Endothelial cell of umbilical vein (primary cell): ENCODE measurements at regions of chr10 and their contacts with region 1.

Region 1: DNA sequence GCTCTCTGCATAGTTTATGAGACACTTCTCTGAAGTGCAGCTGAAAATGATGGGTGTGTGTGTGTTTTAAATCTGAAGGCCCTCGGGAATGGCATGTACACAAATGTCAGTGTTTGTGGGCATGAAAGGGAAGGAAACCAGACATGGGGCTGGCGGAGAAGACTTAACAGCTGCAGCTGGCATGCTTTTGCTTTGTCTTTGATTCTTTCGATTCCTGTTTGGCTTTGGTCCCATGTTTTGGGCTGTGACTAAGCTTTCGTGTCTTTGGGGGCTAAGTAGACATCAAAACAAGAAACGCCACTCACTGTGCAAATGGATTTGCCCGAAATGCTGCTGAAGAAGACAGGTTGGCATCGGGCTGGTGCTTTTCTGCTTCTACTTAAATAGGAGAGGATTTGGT is 179.3 kb downstream of the PFKFB3 start:
- DNase-seq: peak; percentile 84
- H3K4me3 ChIP-seq: no peak overlapping the region
- H3K27ac ChIP-seq: no peak overlapping the region
- H3K4me1 ChIP-seq: peaks cover 8% of the 10 kb centered on the region
- H3K27me3 ChIP-seq: no peaks in the 10 kb centered on the region
- CTCF ChIP-seq: no peak
- POLR2A ChIP-seq: no peak

Region 2: GRCh38 chr10:6364893-6365292 is 17.2 kb before region 1 on chr10:
- CTCF ChIA-PET with region 1: interaction called, 17 read pairs
- POLR2A ChIA-PET with region 1: no interaction called
- dilution Hi-C with region 1: no loop called
- intact Hi-C with region 1: no loop called
- DNase-seq: no peak
- H3K4me3 ChIP-seq: no peak overlapping the region
- H3K27ac ChIP-seq: no peak overlapping the region
- H3K4me1 ChIP-seq: no peaks in the 10 kb centered on the region
- H3K27me3 ChIP-seq: peaks cover 0 to 8% of the 10 kb centered on the region in 2 experiments
- CTCF ChIP-seq: no peak
- POLR2A ChIP-seq: no peak

Region 3: GRCh38 chr10:6416892-6417512 is 34.9 kb after region 1 on chr10:
- CTCF ChIA-PET with region 1: no interaction called
- POLR2A ChIA-PET with region 1: no interaction called
- dilution Hi-C with region 1: no loop called
- intact Hi-C with region 1: no loop called
- DNase-seq: peak; percentile 71
- H3K4me3 ChIP-seq: no peak overlapping the region
- H3K27ac ChIP-seq: no peak overlapping the region
- H3K4me1 ChIP-seq: no peaks in the 10 kb centered on the region
- H3K27me3 ChIP-seq: peaks cover 6 to 7% of the 10 kb centered on the region in 2 experiments
- CTCF ChIP-seq: peak; percentile 39 to 44
- POLR2A ChIP-seq: no peak

Region 4: DNA sequence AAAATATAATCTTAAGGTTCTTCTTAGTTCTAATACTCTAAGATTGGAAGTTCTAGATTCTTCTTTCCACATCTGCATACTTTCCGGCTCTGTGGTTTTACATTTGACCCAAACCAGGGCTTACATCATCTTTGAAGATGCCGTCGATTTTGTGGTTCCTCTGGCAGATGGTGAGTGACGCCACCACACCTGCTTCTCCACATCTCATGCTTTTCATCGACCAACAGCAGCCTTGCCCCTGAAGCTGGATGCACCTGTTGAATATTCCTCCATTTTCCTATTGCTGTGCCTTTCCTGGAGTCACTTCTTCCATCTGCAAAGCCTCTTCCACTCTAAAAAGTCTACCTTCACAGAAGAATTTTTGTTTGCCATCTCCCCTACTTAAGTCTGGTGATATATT is 76.7 kb after region 1 on chr10:
- CTCF ChIA-PET with region 1: no interaction called
- POLR2A ChIA-PET with region 1: no interaction called
- dilution Hi-C with region 1: no loop called
- intact Hi-C with region 1: no loop called
- DNase-seq: no peak
- H3K4me3 ChIP-seq: no peak overlapping the region
- H3K27ac ChIP-seq: no peak overlapping the region
- H3K4me1 ChIP-seq: no peaks in the 10 kb centered on the region
- H3K27me3 ChIP-seq: no peaks in the 10 kb centered on the region
- CTCF ChIP-seq: no peak
- POLR2A ChIP-seq: no peak

Region 5: DNA sequence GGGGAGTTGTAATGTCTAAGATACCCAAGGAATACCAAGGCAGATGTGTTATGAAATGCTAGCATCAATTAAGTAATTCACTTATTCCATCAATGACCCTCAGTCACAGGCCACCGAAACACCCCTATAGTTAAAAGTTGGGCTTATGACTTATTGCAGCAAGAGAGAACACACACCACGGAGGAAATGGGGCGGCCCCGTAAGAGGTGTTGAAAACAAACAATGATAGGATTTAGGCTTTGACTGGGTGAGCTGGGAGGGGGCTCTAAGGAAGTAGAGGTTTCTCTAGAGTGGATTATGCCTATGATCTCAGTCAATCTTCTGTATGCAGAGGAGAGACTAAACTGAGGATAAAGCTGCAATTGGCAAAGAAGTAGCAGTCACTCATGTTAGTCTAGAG is 243.3 kb after region 1 on chr10:
- CTCF ChIA-PET with region 1: no interaction called
- POLR2A ChIA-PET with region 1: no interaction called
- dilution Hi-C with region 1: no loop called
- intact Hi-C with region 1: no loop called
- DNase-seq: no peak
- H3K4me3 ChIP-seq: no peak overlapping the region
- H3K27ac ChIP-seq: no peak overlapping the region
- H3K4me1 ChIP-seq: no peaks in the 10 kb centered on the region
- H3K27me3 ChIP-seq: peaks cover 0 to 3% of the 10 kb centered on the region in 2 experiments
- CTCF ChIP-seq: no peak
- POLR2A ChIP-seq: no peak

Region 6: GRCh38 chr10:7070950-7071349 is 688.9 kb after region 1 on chr10:
- CTCF ChIA-PET with region 1: no interaction called
- POLR2A ChIA-PET with region 1: no interaction called
- dilution Hi-C with region 1: no loop called
- intact Hi-C with region 1: no loop called
- DNase-seq: no peak
- H3K4me3 ChIP-seq: no peak overlapping the region
- H3K27ac ChIP-seq: no peak overlapping the region
- H3K4me1 ChIP-seq: no peaks in the 10 kb centered on the region
- H3K27me3 ChIP-seq: no peaks in the 10 kb centered on the region
- CTCF ChIP-seq: no peak
- POLR2A ChIP-seq: no peak